ENCODE measurements at regions of chr17 and their contacts with region 1.

Region 1: GRCh38 chr17:35977509-35977908 is 3.8 kb downstream of the CCL16 start:
- DNase-seq: no peak
- H3K4me3 ChIP-seq: no peak overlapping the region
- H3K27ac ChIP-seq: no peak overlapping the region
- H3K4me1 ChIP-seq: no peaks in the 10 kb centered on the region
- H3K27me3 ChIP-seq: no peaks in the 10 kb centered on the region
- CTCF ChIP-seq: no peak

Region 2: DNA sequence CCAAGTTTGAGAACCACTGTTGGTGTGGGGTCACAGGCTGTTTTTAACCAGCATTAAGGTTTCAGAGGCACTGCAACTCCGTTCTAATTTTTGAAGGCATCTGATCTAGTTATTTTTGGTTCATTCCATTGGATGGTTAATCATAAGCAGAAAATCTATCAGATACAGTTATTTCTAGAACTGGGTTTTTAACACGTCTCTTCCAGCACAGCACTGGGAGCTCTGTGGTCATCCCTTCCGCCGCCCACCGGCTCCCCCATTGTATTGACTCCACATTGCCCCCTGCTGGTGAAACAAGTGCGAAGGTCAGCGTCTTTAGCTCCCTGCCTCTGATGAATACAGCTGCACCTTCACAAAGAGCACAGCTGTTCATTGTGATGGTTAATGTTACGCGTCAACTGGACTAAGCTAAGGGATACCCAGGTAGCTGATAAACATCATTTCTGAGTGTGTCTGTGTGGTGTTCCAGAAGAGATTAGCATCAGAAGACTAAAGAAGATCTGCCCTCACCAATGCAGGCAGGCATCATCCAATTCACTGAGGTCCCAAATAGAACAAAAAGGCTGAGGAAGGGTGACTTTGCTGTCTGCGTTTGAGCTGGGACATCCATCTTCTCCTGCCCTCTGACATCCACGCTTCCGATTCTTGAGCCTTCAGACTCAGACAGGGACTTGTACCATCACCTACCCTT is 95.1 kb after region 1 on chr17:
- intact Hi-C with region 1: loop called (anchors 5 kb)
- DNase-seq: peak; percentile 84
- H3K4me3 ChIP-seq: no peak overlapping the region
- H3K27ac ChIP-seq: no peak overlapping the region
- H3K4me1 ChIP-seq: no peaks in the 10 kb centered on the region
- H3K27me3 ChIP-seq: no peaks in the 10 kb centered on the region
- CTCF ChIP-seq: peak; percentile 63

Measured in colonic mucosa (tissue), 4 donors.